Naive thymus-derived CD4-positive, alpha-beta T cell (primary cell): ENCODE measurements at regions of chr12 and their contacts with region 1.

Region 1: GRCh38 chr12:10667581-10667980 is 6.3 kb downstream of the STYK1 start:
- DNase-seq: no peak
- ATAC-seq: no peak
- H3K4me3 ChIP-seq: no peak overlapping the region
- H3K4me3 Mint-ChIP-seq: peak overlapping the region in 7 of 10 donors; percentile 14 to 78 (median 57)
- H3K27ac ChIP-seq: no peak overlapping the region
- H3K27ac Mint-ChIP-seq: no peak overlapping the region
- H3K4me1 ChIP-seq: peaks cover 0 to 16% of the 10 kb centered on the region in 2 donors
- H3K4me1 Mint-ChIP-seq: peaks cover 3 to 28% (median 18%) of the 10 kb centered on the region in 7 donors
- H3K27me3 ChIP-seq: no peaks in the 10 kb centered on the region
- H3K27me3 Mint-ChIP-seq: peaks cover 11 to 66% (median 13%) of the 10 kb centered on the region in 5 donors

Region 2: GRCh38 chr12:10584415-10584814 is 83.2 kb before region 1 on chr12:
- CTCF ChIA-PET with region 1: interaction called, 3 read pairs
- POLR2A ChIA-PET with region 1: interaction called, 10 read pairs
- intact Hi-C with region 1: no loop called
- DNase-seq: no peak
- ATAC-seq: no peak
- H3K4me3 ChIP-seq: no peak overlapping the region
- H3K4me3 Mint-ChIP-seq: no peak overlapping the region
- H3K27ac ChIP-seq: no peak overlapping the region
- H3K27ac Mint-ChIP-seq: no peak overlapping the region
- H3K4me1 ChIP-seq: no peaks in the 10 kb centered on the region
- H3K4me1 Mint-ChIP-seq: peaks cover 0 to 1% (median 0%) of the 10 kb centered on the region in 7 donors
- H3K27me3 ChIP-seq: no peaks in the 10 kb centered on the region
- H3K27me3 Mint-ChIP-seq: no peaks in the 10 kb centered on the region

Region 3: DNA sequence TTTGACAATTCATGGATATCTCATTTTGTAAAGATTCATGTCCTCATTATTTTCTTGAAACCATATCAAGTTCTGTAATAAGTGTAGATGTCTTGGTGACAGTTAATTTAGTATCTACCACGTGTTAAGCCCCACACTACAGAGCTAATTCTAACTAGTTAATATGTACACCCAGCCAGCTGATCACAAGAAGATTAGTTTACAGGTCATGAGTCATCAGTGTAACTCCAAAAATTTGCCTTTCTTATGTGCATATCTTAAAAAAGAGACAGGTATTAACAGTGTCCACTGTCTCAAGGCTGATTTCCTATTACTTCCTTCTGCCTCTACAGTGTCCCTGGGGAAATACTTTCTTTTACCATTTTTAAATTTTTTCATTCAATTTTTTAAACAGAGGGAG is 68.9 kb after region 1 on chr12:
- CTCF ChIA-PET with region 1: no interaction called
- POLR2A ChIA-PET with region 1: no interaction called
- intact Hi-C with region 1: no loop called
- DNase-seq: no peak
- ATAC-seq: no peak
- H3K4me3 ChIP-seq: no peak overlapping the region
- H3K4me3 Mint-ChIP-seq: no peak overlapping the region
- H3K27ac ChIP-seq: no peak overlapping the region
- H3K27ac Mint-ChIP-seq: no peak overlapping the region
- H3K4me1 ChIP-seq: no peaks in the 10 kb centered on the region
- H3K4me1 Mint-ChIP-seq: peaks cover 0 to 11% (median 0%) of the 10 kb centered on the region in 7 donors
- H3K27me3 ChIP-seq: no peaks in the 10 kb centered on the region
- H3K27me3 Mint-ChIP-seq: peaks cover 7 to 43% (median 17%) of the 10 kb centered on the region in 5 donors

Region 4: DNA sequence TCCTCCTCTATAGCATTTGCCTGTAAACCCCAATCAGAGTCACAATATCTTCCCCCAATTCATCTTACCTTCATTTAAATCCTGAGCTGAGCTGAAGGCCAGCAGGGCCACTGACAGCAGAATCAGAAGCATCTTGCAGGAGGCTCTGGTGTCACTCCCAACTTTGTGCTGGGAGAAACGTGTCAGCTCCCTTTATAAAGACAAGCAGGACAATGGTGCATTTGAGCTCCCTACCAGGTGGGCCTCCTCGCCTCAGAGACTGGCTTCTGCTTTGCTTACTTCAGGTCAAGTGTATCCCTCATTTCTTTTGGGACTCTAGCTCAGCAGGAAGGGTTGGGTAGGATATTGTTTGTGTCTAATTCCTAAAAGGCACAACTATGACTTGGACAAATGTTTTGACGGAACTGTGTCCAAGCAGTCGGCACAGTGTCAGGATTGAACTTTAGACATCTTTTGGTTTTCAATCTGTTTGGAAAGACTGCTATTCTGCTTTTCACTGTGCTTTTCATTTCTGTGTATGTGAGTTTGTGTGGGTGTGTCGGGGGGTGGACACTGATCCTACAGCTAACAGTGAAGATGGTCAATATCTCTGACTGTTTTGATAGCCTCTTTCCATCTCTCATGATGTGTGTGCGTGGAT is 216.6 kb after region 1 on chr12 and contains the start of gene PRH1:
- CTCF ChIA-PET with region 1: no interaction called
- POLR2A ChIA-PET with region 1: no interaction called
- intact Hi-C with region 1: no loop called
- DNase-seq: no peak
- ATAC-seq: no peak
- H3K4me3 ChIP-seq: no peak within 1 kb of the TSS
- H3K4me3 Mint-ChIP-seq: no peak within 1 kb of the TSS
- H3K27ac ChIP-seq: no peak within 1 kb of the TSS
- H3K27ac Mint-ChIP-seq: no peak within 1 kb of the TSS
- H3K4me1 ChIP-seq: no peaks in the 10 kb centered on the region
- H3K4me1 Mint-ChIP-seq: peaks cover 0 to 9% (median 0%) of the 10 kb centered on the region in 7 donors
- H3K27me3 ChIP-seq: no peaks in the 10 kb centered on the region
- H3K27me3 Mint-ChIP-seq: no peaks in the 10 kb centered on the region
- total RNA-seq, gene PRH1: 19.9 to 37.8 (median 29.8) TPM